Activated CD4-positive, alpha-beta T cell treated with anti-CD3 and anti-CD28 coated beads, Interleukin-2, amount 10 ng/mL, durations not matched to agents 24 days and 14 days (primary cell): ENCODE measurements at regions of chr5 and their contacts with region 1.

Region 1: GRCh38 chr5:151080623-151081430 is at the start of gene TNIP1:
- DNase-seq: peak; percentile 99
- H3K4me3 Mint-ChIP-seq: peak within 1 kb of the TSS; percentile 86
- H3K27ac Mint-ChIP-seq: peak within 1 kb of the TSS; percentile 94
- H3K4me1 Mint-ChIP-seq: peaks cover 77% of the 10 kb centered on the region
- H3K27me3 Mint-ChIP-seq: no peaks in the 10 kb centered on the region
- total RNA-seq, gene TNIP1: 345 and 360 TPM in 2 replicates

Region 2: GRCh38 chr5:149345147-149345875 is 1735.5 kb before region 1 on chr5 and contains the start of gene GRPEL2:
- intact Hi-C with region 1: loop called (anchors 10 kb)
- DNase-seq: peak; percentile 97
- H3K4me3 Mint-ChIP-seq: peak within 1 kb of the TSS; percentile 96
- H3K27ac Mint-ChIP-seq: peak within 1 kb of the TSS; percentile 97
- H3K4me1 Mint-ChIP-seq: peaks cover 46% of the 10 kb centered on the region
- H3K27me3 Mint-ChIP-seq: peaks cover 1% of the 10 kb centered on the region
- total RNA-seq, gene GRPEL2: 30.6 and 30.7 TPM in 2 replicates

Region 3: DNA sequence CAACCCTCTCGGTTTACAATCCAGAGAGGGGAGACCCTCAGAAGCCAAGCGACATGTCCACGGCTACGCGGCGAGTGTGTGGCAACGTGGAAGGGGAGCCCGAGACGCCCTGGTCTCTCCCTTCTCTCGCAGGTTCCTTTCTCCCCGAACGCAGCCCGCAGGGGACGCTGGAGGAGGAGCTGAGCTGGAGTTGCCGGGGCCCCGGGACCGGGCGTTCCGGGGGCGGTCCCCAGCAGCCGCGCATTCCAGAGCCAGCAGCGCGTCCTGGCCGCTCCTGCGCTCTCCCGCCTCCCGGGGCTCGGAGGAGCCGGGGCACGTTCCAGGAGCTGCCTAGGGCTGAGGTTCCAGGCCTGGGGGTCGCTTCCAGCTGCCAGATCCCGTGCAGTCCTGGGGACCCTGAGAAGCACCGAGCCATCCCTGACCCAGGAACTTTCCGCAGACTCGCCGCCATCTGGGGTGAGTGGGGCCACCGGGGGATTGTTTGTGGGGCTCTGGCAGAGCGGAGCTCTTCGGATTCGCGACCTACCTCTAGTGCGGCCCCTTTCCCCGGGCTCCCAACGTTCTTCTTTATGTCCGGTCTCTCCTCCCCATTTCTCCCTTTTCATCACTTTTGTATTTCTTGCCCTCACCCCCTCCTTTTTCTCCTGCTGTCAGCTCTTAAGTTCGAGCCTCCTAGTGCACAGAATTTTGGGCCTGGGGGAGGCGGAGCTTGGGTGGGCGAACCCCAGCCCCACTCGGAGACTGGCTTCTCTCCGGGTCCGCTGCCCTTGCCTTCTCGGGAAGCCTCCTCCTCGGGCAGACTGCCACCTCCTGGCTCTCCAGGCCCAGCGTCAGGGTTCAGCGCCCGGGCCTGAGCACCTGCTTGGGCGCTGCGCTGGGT is 302.1 kb before region 1 on chr5 and contains the start of gene SMIM3:
- intact Hi-C with region 1: loop called (anchors 5 kb)
- DNase-seq: peak; percentile 91
- H3K4me3 Mint-ChIP-seq: peak within 1 kb of the TSS; percentile 100
- H3K27ac Mint-ChIP-seq: peak within 1 kb of the TSS; percentile 97
- H3K4me1 Mint-ChIP-seq: peaks cover 56% of the 10 kb centered on the region
- H3K27me3 Mint-ChIP-seq: no peaks in the 10 kb centered on the region
- total RNA-seq, gene SMIM3: 13.8 and 16.6 TPM in 2 replicates

Region 4: DNA sequence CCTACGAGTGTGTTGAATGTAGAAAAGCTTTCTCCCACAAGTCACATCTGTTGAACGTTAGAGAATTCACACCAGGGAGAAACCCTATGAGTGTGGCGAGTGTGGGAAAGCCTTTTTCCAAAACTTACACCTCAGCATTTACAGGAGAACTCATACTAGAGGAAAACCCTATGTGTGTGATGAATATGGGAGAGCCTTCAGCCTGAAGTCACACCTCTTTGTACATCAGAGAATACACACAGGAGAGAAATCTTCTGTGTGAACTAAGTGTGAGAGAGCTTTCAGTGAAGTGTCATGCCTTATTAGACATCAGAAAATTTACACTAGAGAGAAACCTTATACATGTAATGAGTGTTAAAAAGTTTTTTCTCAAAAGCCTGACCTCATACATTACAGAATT is 102.2 kb before region 1 on chr5:
- intact Hi-C with region 1: no loop called
- DNase-seq: no peak
- H3K4me3 Mint-ChIP-seq: no peak overlapping the region
- H3K27ac Mint-ChIP-seq: no peak overlapping the region
- H3K4me1 Mint-ChIP-seq: no peaks in the 10 kb centered on the region
- H3K27me3 Mint-ChIP-seq: peaks cover 1% of the 10 kb centered on the region

Region 5: GRCh38 chr5:151094054-151094851 is 13.4 kb after region 1 on chr5:
- intact Hi-C with region 1: loop called (anchors 1 kb)
- DNase-seq: peak; percentile 88
- H3K4me3 Mint-ChIP-seq: peak overlapping the region; percentile 74
- H3K27ac Mint-ChIP-seq: peak overlapping the region; percentile 90
- H3K4me1 Mint-ChIP-seq: peaks cover 63% of the 10 kb centered on the region
- H3K27me3 Mint-ChIP-seq: no peaks in the 10 kb centered on the region

Region 6: DNA sequence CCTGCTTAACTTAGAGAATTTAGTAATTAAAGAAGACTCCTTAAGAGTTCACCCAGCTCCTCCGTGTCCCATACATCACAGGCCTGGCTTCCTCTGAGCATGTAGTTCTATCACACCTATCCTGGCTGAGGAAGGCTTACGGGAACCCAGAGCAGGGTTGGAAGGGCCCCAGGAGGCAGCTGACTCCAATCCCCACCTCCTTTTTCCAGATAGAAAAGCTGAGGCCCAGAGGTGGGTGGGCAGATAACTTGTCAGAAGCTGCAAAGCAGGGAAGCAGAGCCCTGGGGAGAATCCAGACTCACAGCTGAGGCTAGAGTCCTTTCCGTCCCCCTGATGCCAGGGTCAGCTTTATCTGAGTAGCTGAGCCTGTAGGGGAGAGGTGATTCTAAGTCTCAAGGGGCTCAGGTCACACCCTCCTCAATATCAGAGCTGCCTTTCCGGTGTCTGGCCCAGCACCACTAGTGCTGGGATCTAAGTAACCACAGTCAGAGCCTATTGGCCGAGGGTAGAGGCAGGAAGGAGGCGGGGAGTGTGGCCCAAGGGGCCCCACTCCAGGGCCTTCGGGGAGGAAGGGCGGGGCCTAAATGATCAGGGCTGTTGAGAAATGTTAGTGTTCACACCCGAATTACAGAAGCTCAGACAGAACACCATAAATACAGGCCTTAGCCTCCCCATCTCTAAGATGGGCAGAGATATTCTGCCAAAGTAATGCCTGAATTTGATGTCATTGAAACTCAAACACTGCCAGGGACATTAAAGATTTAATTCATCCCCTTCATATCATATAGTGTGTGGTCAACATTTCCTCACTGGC is 133.2 kb after region 1 on chr5:
- intact Hi-C with region 1: loop called (anchors 2 kb)
- DNase-seq: peak; percentile 95
- H3K4me3 Mint-ChIP-seq: peak overlapping the region; percentile 91
- H3K27ac Mint-ChIP-seq: peak overlapping the region; percentile 95
- H3K4me1 Mint-ChIP-seq: peaks cover 72% of the 10 kb centered on the region
- H3K27me3 Mint-ChIP-seq: no peaks in the 10 kb centered on the region